Dorsolateral prefrontal cortex (tissue), 120 donors: ENCODE measurements at regions of chr2 and their contacts with region 1.

Region 1: DNA sequence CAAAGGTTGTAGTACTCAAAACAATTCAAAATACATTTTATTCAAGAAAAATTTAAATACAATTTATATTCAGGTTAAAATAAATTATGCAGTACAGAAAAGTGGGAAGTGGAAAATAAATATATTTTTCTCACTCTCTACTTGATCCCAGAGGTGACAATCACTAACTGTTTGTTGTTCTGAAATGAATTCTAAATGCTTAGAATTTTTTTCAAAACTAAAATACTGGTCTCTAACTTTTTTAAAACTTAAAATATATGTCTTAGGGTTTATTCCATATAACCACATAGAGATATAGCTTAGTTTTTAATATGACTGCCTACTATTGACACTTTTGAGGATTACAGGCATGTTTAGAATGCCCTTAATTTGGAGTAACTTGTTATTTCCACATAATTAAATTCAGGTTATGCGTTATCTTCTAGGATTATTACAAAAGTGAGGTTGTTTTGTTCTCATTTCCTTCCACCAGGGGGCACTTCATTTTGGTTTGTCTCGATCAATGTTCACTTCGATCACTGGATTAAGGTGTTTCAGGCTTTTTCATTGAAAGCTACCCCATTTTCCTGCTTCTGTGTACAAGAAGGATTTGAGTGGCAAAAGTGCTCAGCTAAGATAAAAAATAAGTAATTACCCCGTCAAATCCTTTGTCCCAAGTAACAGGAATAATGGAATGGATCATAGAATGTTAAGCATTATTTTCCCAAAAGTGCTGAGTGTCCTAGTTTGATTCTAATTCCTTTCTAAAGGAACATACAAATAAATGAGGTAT is 27.1 kb upstream of the TFPI start:
- DNase-seq: no peak
- H3K4me3 ChIP-seq: peak overlapping the region in 46 of 59 donors; percentile 3 to 55 (median 29)
- H3K27ac ChIP-seq: no peak overlapping the region
- H3K27me3 ChIP-seq: no peaks in the 10 kb centered on the region
- CTCF ChIP-seq: peak; percentile 53 to 96 (median 77)

Region 2: DNA sequence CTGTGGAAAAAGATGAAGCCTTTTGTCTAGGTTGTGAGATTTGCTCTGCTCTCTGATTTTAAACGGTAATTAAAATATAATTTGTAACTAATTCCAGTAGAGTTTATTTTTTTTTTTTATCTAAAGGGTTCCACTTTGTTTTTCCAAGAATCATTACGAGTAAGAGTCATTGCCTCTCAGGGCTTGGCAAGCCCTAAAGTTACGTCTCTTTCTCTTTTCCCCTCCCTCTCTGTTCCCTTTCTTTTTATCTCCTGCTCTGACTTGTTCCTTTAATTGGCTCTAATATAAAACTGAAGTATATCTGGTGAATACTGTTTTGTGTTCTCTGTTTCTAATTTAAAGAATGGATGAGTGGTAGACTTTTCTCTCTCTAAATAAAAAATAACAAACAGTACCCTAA is 209.1 kb before region 1 on chr2:
- intact Hi-C with region 1: no loop called
- DNase-seq: no peak
- H3K4me3 ChIP-seq: no peak overlapping the region
- H3K27ac ChIP-seq: no peak overlapping the region
- H3K27me3 ChIP-seq: no peaks in the 10 kb centered on the region
- CTCF ChIP-seq: no peak

Region 3: GRCh38 chr2:187499941-187500532 is 81.3 kb before region 1 on chr2:
- intact Hi-C with region 1: loop called (anchors 2 to 5 kb)
- DNase-seq: peak in 7 of 10 donors; percentile 24 to 75 (median 55)
- H3K4me3 ChIP-seq: no peak overlapping the region
- H3K27ac ChIP-seq: no peak overlapping the region
- H3K27me3 ChIP-seq: no peaks in the 10 kb centered on the region
- CTCF ChIP-seq: peak; percentile 68 to 96 (median 84)

Region 4: DNA sequence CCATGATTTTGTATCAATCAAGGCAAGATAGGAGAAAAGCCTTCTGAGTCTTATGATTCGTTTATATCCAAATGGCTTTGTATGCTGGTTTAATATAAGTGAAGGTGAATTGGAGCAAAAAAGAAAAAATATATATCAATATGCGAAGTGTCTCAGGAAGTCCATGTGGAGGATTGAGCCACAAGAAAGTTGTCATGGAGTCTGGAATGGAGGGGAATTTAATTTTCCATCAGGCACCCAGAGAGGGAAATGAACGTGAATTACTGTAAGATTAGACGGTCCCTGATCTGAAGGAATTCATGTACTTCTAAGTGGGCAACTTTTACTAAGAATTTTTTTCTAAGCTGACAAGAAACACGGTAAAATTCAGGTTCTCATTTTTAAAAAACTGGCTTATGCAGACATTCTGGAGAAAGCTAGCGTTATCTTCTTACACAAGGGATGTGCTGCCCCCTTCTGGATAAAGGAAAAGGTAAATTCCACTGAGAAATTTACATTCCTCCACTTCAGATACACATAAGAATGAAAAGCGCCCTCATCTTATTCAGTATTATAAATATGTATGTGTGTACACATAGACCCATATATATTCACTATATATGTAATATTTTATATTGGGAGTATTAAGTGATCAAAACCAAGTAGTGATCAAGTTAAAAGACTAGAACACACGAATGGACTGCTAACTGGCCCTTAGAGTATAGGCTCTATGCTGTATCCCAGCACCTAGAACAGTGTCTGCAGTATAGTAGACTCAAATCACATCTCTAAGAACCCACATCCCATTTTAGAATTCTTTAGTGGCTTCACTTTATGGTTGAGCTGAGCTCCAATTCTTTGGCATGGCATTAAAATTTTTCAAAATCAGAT is 261.9 kb after region 1 on chr2:
- intact Hi-C with region 1: loop called (anchors 10 kb)
- DNase-seq: no peak
- H3K4me3 ChIP-seq: no peak overlapping the region
- H3K27ac ChIP-seq: no peak overlapping the region
- H3K27me3 ChIP-seq: no peaks in the 10 kb centered on the region
- CTCF ChIP-seq: peak; percentile 34 to 81 (median 65)

Region 5: DNA sequence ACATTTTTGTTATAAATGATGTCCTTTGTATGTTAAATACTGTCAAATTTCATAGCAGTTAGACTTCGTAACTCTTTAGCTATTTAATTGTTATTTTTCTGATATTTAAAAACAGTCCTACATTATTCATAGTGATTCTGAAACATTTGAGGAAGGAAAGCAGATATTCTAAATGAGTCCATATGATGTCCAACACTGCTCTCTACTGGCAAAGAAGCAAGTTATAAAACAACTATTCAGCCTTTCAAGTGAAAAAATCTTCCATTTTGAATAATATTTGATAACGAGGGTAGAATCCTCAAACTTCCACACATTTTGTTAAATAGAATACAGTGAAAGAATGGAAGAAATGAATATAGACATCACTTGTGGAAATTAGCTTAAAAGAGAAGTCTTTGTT is 931.1 kb after region 1 on chr2:
- intact Hi-C with region 1: loop called (anchors 10 kb)
- DNase-seq: no peak
- H3K4me3 ChIP-seq: no peak overlapping the region
- H3K27ac ChIP-seq: no peak overlapping the region
- H3K27me3 ChIP-seq: no peaks in the 10 kb centered on the region
- CTCF ChIP-seq: peak; percentile 32 to 87 (median 68)